CD4-positive, alpha-beta memory T cell (primary cell): ENCODE measurements at regions of chr3 and their contacts with region 1.

Region 1: DNA sequence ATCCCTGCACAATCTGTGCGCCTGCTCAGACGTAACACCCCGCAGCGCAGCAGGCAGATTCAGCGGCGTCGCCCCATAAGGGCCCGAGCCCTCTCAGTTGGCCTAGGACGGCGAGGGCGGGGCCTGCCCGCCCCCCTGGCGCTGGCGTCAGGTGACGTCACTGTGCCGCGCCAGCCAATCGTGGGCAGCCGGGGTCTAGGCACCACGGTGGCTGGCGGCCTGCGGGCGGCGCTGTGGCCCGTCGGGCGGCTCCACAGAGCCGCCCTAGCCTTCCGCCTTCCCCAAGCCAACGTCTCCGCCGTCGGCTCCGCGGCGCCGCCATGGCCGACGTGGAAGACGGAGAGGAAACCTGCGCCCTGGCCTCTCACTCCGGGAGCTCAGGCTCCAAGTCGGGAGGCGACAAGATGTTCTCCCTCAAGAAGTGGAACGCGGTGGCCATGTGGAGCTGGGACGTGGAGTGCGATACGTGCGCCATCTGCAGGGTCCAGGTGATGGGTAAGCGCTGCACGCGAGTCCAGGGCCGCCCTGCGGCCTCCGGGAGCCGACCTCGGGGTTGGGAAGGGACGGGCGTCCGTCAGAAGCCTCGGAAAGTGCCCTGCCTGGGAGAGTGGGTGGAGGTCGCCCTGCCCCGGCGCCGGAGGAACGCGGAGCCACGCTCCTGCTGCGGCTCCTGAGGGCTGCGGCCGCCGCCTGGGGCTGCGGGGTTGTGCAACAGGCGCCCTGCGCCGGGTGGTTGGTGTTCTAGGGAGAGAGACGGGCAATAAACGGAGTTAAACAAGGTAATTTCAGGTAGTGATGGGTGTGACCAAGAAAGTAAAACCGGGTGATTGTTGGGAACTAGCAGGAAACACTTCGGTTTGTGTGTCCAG is at the start of gene RNF7:
- DNase-seq: peak; percentile 95 to 98 (median 98)
- H3K4me3 ChIP-seq: peak within 1 kb of the TSS; percentile 62 to 91
- H3K4me3 Mint-ChIP-seq: peak within 1 kb of the TSS; percentile 98 to 100 (median 99)
- H3K27ac ChIP-seq: peak within 1 kb of the TSS; percentile 96
- H3K27ac Mint-ChIP-seq: peak within 1 kb of the TSS; percentile 96 to 100 (median 99)
- H3K4me1 ChIP-seq: peaks cover 38% of the 10 kb centered on the region
- H3K4me1 Mint-ChIP-seq: peaks cover 21 to 54% (median 38%) of the 10 kb centered on the region in 4 donors
- H3K27me3 ChIP-seq: no peaks in the 10 kb centered on the region
- H3K27me3 Mint-ChIP-seq: no peaks in the 10 kb centered on the region
- total RNA-seq, gene RNF7: 56.3 to 65.2 TPM

Region 2: DNA sequence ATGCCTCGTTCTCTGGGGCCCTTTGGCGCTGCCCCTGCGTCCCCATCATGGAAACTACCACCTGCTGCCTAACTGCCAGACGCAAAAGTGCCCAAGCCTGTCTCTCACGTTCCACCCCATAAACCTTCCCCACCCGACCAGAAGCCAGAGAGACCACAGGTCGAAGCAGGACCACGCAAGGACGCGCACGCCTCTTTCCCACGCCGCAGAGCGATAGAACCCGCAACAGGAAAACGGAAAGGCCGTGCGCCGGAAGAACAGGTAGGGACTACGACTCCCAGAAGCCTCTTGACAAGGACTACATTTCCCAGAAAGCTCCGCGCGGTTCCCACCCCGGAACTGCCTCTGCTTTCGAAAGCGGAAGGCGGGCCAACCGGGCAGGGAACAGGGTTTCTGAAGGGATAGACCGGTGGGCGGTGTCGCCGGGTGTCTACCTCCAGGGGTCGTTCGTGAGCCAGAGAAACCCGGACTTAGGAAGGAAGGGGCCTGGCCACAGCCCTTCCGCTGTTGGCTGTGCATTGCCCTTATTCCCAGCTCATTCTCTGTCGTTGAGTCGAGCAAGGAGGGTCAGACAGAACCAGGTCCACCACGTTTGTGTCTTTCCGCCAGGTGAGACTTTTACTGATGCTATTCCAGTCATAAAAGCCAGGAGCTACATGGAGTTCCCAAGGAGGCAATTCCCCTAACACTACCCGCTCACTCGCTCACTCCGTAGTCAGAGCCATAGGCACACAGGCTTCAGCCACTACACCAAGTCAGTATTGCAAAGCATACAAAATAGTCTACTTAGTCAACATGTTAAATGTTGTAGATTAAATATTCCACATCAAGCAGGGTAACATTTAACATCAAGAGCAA is 426.5 kb before region 1 on chr3:
- CTCF ChIA-PET with region 1: interaction called, 5 read pairs
- POLR2A ChIA-PET with region 1: interaction called, 4 read pairs
- intact Hi-C with region 1: loop called (anchors 1 kb)
- DNase-seq: peak; percentile 97 to 99 (median 98)
- H3K4me3 ChIP-seq: peak overlapping the region; percentile 68 to 73
- H3K4me3 Mint-ChIP-seq: peak overlapping the region; percentile 92 to 100 (median 98)
- H3K27ac ChIP-seq: peak overlapping the region; percentile 66
- H3K27ac Mint-ChIP-seq: peak overlapping the region; percentile 89 to 99 (median 97)
- H3K4me1 ChIP-seq: peaks cover 46% of the 10 kb centered on the region
- H3K4me1 Mint-ChIP-seq: peaks cover 32 to 60% (median 49%) of the 10 kb centered on the region in 4 donors
- H3K27me3 ChIP-seq: no peaks in the 10 kb centered on the region
- H3K27me3 Mint-ChIP-seq: no peaks in the 10 kb centered on the region

Region 3: GRCh38 chr3:141487521-141488252 is 250.6 kb before region 1 on chr3:
- CTCF ChIA-PET with region 1: no interaction called
- POLR2A ChIA-PET with region 1: interaction called, 13 read pairs
- intact Hi-C with region 1: no loop called
- DNase-seq: peak; percentile 87 to 94 (median 89)
- H3K4me3 ChIP-seq: peak overlapping the region; percentile 48 to 60
- H3K4me3 Mint-ChIP-seq: peak overlapping the region; percentile 87 to 97 (median 94)
- H3K27ac ChIP-seq: peak overlapping the region; percentile 91
- H3K27ac Mint-ChIP-seq: peak overlapping the region; percentile 72 to 99 (median 95)
- H3K4me1 ChIP-seq: peaks cover 64% of the 10 kb centered on the region
- H3K4me1 Mint-ChIP-seq: peaks cover 59 to 75% (median 65%) of the 10 kb centered on the region in 4 donors
- H3K27me3 ChIP-seq: no peaks in the 10 kb centered on the region
- H3K27me3 Mint-ChIP-seq: no peaks in the 10 kb centered on the region

Region 4: GRCh38 chr3:141870091-141870687 is 131.9 kb after region 1 on chr3:
- CTCF ChIA-PET with region 1: interaction called, 76 read pairs
- POLR2A ChIA-PET with region 1: interaction called, 86 read pairs
- intact Hi-C with region 1: loop called (anchors 1 kb)
- DNase-seq: no peak
- H3K4me3 ChIP-seq: no peak overlapping the region
- H3K4me3 Mint-ChIP-seq: no peak overlapping the region
- H3K27ac ChIP-seq: no peak overlapping the region
- H3K27ac Mint-ChIP-seq: no peak overlapping the region
- H3K4me1 ChIP-seq: peaks cover 3% of the 10 kb centered on the region
- H3K4me1 Mint-ChIP-seq: peaks cover under 1 to 3% (median 2%) of the 10 kb centered on the region in 4 donors
- H3K27me3 ChIP-seq: no peaks in the 10 kb centered on the region
- H3K27me3 Mint-ChIP-seq: no peaks in the 10 kb centered on the region

Region 5: GRCh38 chr3:141998669-141999290 is 260.5 kb after region 1 on chr3:
- CTCF ChIA-PET with region 1: no interaction called
- POLR2A ChIA-PET with region 1: no interaction called
- intact Hi-C with region 1: loop called (anchors 1 kb)
- DNase-seq: peak in 1 of 5 donors; percentile 5
- H3K4me3 ChIP-seq: no peak overlapping the region
- H3K4me3 Mint-ChIP-seq: no peak overlapping the region
- H3K27ac ChIP-seq: no peak overlapping the region
- H3K27ac Mint-ChIP-seq: peak overlapping the region in 1 of 7 donors; percentile 25
- H3K4me1 ChIP-seq: no peaks in the 10 kb centered on the region
- H3K4me1 Mint-ChIP-seq: no peaks in the 10 kb centered on the region
- H3K27me3 ChIP-seq: no peaks in the 10 kb centered on the region
- H3K27me3 Mint-ChIP-seq: no peaks in the 10 kb centered on the region

Region 6: DNA sequence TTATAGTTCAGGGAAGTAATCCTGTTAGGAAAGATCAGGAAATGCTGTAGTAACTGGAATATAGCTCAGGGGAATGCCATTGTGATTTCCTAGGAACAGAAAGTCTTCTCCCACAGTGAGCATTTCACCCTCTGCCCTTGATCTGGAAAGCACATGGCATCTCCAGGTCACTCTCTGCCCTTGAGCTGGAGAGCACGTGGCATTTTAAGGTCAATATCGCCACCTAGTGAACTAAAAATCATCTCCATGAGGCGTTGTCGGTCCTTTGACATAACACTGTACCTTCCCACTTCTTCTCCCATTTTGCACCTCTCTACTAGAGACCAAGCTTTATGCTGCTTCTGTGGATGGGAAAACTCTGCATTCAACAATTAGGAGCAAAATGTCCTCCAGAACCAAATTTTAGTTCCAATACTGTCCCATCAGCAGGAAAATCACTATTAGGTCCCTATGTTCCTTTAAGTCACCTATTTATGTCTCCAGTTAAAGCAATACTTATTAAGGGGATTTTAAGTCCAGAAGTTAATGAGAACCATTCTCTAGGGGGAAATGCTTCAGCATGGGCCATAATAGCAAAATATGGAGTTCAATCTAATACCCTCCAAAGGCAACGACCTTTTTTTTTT is 541.8 kb after region 1 on chr3:
- CTCF ChIA-PET with region 1: interaction called, 4 read pairs
- POLR2A ChIA-PET with region 1: no interaction called
- intact Hi-C with region 1: loop called (anchors 1 kb)
- DNase-seq: peak; percentile 47 to 64 (median 60)
- H3K4me3 ChIP-seq: no peak overlapping the region
- H3K4me3 Mint-ChIP-seq: no peak overlapping the region
- H3K27ac ChIP-seq: no peak overlapping the region
- H3K27ac Mint-ChIP-seq: peak overlapping the region in 1 of 7 donors; percentile 38
- H3K4me1 ChIP-seq: peaks cover 3% of the 10 kb centered on the region
- H3K4me1 Mint-ChIP-seq: peaks cover 13 to 24% (median 17%) of the 10 kb centered on the region in 4 donors
- H3K27me3 ChIP-seq: no peaks in the 10 kb centered on the region
- H3K27me3 Mint-ChIP-seq: no peaks in the 10 kb centered on the region

Region 7: DNA sequence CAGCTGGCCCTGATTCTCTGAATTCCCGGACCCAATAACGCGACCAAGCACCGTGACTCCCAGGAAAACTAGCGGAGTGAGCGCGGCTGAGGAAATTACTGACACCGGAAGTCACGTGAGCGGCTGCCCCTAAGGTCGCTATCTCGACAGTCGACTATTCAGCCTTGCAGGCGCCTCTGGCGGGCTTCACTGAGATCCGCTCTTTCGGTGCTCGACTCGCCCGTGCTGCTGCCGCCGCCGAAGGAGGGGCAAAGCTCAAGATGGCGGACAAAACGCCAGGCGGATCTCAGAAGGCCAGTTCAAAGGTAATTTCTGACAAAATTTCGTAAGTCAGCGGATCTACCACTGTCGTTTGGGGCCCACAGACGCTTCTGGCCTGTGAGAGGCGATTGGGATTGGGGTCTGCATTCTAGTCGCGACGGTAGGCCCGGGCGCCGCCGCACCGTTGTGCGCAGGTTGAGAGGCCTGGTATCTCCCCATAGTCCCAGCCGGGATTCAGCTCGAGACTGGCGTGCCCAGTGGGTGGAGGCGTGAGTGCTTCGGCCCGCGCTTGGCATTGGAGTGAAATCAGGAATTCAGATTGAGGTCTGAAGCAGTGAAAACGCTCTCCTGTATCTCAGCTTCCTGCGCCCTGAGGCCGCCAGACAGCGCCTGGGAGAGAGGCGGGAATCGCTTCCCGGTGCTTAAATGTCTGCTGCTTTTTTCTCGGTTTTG is 1263.3 kb after region 1 on chr3 and contains the start of gene U2SURP:
- CTCF ChIA-PET with region 1: no interaction called
- POLR2A ChIA-PET with region 1: interaction called, 3 read pairs
- intact Hi-C with region 1: loop called (anchors 1 kb)
- DNase-seq: peak; percentile 88 to 96 (median 92)
- H3K4me3 ChIP-seq: peak within 1 kb of the TSS; percentile 82 to 100
- H3K4me3 Mint-ChIP-seq: peak within 1 kb of the TSS; percentile 97 to 100 (median 99)
- H3K27ac ChIP-seq: peak within 1 kb of the TSS; percentile 95
- H3K27ac Mint-ChIP-seq: peak within 1 kb of the TSS; percentile 97 to 100 (median 100)
- H3K4me1 ChIP-seq: peaks cover 49% of the 10 kb centered on the region
- H3K4me1 Mint-ChIP-seq: peaks cover 28 to 57% (median 38%) of the 10 kb centered on the region in 4 donors
- H3K27me3 ChIP-seq: no peaks in the 10 kb centered on the region
- H3K27me3 Mint-ChIP-seq: peaks cover 0 to 2% of the 10 kb centered on the region in 2 donors
- total RNA-seq, gene U2SURP: 137 TPM